Thyroid gland (tissue), 4 donors: ENCODE measurements at regions of chr12 and their contacts with region 1.

Region 1: DNA sequence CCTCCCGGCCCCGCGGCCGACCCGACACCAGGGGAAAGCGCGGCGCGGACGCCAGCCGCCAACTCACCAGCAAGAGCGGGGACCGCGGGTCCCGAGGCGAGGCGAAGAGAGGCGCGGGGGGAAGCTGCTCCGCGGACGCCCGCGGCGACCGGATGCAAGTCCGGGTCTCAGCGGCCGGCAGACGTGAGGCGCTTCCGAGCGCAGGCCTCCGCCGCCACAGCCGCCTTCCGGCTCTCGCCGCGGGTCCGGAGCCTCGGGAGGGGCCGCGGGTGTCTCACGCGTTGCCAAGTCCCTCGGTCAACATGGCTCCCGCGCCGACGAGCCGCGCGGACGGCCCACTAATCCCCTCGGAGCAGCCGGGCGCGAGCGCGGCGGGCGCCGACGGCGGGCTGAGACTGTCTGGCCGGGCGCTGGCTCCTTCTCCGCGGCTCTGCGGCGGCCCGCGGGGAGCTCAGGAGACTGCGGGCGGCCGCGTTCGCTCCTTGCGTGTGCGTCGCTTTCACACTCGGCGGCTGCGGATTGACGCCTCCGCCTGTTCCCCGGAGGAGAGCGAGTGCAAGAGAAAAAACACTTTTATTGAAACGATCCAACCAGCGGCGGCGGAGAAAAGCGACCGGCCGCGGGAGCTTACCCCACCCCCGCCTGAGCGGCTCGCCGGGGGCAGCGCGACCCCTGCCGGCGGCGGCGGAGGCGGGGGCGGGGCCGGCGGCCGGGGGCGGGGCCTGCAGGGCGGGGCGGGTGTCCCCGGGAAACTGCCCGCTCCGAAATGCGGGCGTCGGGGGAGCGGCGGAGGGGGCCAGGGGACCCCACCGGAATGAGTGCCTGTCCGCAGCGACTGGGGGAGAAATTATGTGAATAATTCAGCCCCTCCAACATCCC is at the start of gene CDK17:
- DNase-seq: peak; percentile 81 to 83
- H3K4me3 ChIP-seq: peak within 1 kb of the TSS; percentile 57 to 89 (median 81)
- H3K27ac ChIP-seq: peak within 1 kb of the TSS; percentile 97 to 98 (median 98)
- H3K4me1 ChIP-seq: peaks cover 8 to 15% of the 10 kb centered on the region in 2 donors
- H3K27me3 ChIP-seq: no peaks in the 10 kb centered on the region
- CTCF ChIP-seq: peak in 4 of 6 experiments; percentile 13 to 84 (median 49)
- POLR2A ChIP-seq: peak; percentile 7 to 73
- total RNA-seq, gene CDK17: 32.4 to 64.7 (median 49.0) TPM

Region 2: GRCh38 chr12:96061864-96062453 is 338.2 kb before region 1 on chr12:
- intact Hi-C with region 1: loop called (anchors 10 kb)
- DNase-seq: peak; percentile 76 to 81
- H3K4me3 ChIP-seq: no peak overlapping the region
- H3K27ac ChIP-seq: no peak overlapping the region
- H3K4me1 ChIP-seq: no peaks in the 10 kb centered on the region
- H3K27me3 ChIP-seq: no peaks in the 10 kb centered on the region
- CTCF ChIP-seq: peak; percentile 23 to 98 (median 78)
- POLR2A ChIP-seq: no peak

Region 3: DNA sequence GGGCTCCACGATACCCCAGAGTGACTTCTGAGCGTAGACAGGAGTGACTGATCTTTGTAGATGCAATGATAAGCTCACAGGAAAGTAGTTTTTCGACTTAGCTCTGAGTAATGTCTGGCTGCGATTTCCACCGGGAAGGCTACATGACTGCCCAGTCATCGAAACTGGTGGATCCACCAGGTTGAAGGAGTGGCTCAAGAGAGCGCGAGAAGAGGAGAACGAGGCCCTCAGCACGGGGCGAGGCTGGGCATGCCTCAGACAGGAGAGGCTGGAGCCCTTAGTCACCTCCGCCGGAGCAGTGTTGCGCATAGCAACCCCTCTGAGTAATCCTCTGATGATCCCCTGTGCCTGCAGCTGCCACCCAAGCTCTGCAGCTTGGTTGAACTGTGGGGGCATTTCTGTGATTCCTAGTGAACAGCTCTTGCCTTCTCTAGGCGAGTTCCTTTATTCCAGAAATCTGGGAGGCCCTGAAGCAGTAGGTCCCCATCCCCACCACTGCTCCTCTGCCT is 180.4 kb before region 1 on chr12:
- intact Hi-C with region 1: loop called (anchors 10 kb)
- DNase-seq: peak in 1 of 2 donors; percentile 32
- H3K4me3 ChIP-seq: no peak overlapping the region
- H3K27ac ChIP-seq: peak overlapping the region in 1 of 3 donors; percentile 37
- H3K4me1 ChIP-seq: peaks cover 7 to 17% of the 10 kb centered on the region in 2 donors
- H3K27me3 ChIP-seq: no peaks in the 10 kb centered on the region
- CTCF ChIP-seq: no peak
- POLR2A ChIP-seq: no peak

Region 4: GRCh38 chr12:96368233-96368632 is 31.9 kb before region 1 on chr12:
- intact Hi-C with region 1: no loop called
- DNase-seq: peak; percentile 44 to 48
- H3K4me3 ChIP-seq: no peak overlapping the region
- H3K27ac ChIP-seq: peak overlapping the region in 1 of 3 donors; percentile 37
- H3K4me1 ChIP-seq: peaks cover 28 to 30% of the 10 kb centered on the region in 2 donors
- H3K27me3 ChIP-seq: no peaks in the 10 kb centered on the region
- CTCF ChIP-seq: no peak
- POLR2A ChIP-seq: no peak

Region 5: GRCh38 chr12:96516472-96517430 is 116.6 kb after region 1 on chr12:
- intact Hi-C with region 1: loop called (anchors 10 kb)
- DNase-seq: peak; percentile 81 to 85
- H3K4me3 ChIP-seq: no peak overlapping the region
- H3K27ac ChIP-seq: no peak overlapping the region
- H3K4me1 ChIP-seq: peaks cover 0 to 19% of the 10 kb centered on the region in 2 donors
- H3K27me3 ChIP-seq: no peaks in the 10 kb centered on the region
- CTCF ChIP-seq: peak; percentile 19 to 90 (median 66)
- POLR2A ChIP-seq: no peak